RWPE1 (cell line): ENCODE measurements at regions of chr20 and their contacts with region 1.

Region 1: DNA sequence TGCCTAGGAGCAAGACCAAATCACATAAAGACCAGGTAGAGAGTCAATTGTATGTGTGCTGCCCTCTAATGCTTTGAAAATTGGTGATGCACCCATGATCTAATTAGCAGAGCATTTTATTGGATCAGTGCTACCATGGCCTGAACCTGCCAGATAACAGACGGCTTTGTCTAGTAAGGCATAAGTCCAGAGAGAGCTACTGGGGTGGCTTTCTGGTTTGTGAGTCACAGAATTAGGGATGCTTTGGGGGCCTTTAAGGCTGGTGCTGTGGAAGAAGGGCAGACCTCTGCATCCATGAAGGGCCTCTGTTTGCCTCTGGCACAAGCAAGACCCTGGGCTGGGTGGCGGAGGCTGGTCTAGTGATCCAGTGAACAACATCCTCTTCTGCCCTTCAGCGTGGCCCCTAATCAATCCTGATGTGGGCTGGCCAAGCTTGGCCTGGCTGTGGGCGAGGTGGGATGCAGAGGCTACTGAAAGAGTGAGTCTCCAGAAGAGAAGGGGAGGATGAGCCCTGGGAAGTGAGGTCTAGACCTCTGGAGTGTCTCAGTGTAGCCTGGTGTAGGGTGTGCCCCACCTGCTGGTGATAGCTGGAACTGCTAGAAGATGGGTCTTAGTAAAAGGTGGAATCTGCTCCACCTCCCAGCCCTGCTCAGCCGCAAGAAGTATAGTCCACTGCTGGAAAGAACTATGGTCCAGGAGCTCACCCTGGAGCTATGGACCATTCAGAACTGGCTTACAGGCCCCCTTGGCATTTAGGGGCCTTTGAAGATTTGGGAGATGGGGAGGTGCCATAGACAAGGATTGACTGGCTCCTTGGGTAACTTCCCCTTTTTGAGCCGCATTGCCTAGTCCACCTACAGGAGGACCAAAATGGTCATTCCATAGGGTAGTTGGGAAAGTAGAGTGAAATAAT is 36.7 kb upstream of the AAR2 start:
- DNase-seq: peak; percentile 92
- H3K27ac ChIP-seq: no peak overlapping the region
- CTCF ChIP-seq: peak; percentile 99

Region 2: DNA sequence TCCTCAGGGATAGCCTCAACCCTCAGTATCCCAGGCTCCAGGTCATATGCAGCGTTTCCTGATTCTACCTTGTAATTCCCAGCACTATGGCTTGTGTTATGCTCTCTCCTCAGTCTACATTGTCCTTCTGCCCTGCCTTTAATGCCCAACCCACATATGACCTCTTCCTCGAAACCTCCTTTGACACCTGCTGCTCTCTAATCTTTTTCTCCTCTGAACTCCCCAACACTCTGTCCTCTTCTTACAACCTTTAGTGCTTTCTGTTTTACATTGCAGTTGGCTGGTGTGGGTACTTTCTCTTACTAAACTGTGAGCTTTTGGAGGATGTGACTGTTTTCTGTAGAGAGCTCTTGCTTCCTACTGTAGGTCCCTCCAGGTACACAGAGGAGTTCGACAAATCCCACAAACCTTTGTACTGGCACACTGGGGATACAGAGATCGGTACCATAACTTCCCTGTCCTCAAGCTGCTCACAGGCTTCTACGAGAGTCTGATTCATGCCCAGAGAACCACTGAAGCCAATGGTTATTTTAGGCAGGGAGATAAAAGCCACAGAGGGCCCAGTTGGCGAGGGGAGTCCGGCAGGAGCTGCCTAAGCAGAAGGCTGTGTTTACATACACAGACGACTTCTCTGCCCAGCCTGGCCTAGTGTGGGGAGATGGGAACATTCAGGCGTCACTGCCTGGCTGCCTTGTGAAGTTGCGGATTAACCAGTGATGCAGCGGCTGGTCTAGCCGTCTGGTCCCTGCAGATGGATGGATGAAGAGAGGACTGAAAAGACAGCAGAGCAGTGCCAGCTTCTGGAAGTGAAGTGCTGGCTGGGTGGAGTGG is 53.5 kb before region 1 on chr20:
- CTCF ChIA-PET with region 1: interaction called, 19 read pairs
- POLR2A ChIA-PET with region 1: no interaction called
- DNase-seq: no peak
- H3K27ac ChIP-seq: no peak overlapping the region
- CTCF ChIP-seq: no peak

Region 3: DNA sequence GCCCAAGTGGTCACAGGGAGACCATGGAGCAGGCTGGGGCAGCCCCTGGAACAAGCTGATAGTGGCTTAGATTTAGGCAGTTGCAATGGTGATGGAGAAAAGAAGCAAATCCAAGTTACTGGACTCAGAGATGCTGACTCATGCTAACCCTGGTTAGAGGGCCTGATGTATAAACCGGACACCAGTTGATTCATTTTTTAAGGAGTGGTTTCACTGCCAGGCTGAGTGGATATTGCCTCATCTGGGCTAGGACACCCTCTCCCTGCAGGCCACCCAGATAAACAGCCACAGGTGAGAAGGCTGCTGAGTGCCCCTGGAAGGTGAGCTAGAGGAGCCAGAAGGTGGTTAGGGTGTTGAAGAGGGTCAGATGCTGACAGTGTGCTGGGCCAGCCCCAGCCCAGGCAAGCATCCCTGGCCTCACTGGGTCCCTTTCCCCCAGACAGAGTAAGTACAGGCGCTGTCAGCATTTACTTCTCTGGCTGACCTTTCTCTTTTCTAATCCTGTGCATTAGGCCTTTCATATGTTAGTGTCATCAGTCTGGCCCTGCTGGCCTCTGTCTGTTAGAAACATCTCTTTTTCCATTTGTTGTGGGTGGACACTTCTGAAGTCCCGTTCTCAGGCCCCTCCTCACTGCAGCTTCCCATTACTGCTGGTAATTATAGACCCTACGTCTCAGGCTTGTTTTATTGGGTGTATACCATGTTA is 31.6 kb before region 1 on chr20:
- CTCF ChIA-PET with region 1: interaction called, 10 read pairs
- POLR2A ChIA-PET with region 1: no interaction called
- DNase-seq: peak; percentile 80
- H3K27ac ChIP-seq: peak overlapping the region; percentile 65
- CTCF ChIP-seq: no peak

Region 4: DNA sequence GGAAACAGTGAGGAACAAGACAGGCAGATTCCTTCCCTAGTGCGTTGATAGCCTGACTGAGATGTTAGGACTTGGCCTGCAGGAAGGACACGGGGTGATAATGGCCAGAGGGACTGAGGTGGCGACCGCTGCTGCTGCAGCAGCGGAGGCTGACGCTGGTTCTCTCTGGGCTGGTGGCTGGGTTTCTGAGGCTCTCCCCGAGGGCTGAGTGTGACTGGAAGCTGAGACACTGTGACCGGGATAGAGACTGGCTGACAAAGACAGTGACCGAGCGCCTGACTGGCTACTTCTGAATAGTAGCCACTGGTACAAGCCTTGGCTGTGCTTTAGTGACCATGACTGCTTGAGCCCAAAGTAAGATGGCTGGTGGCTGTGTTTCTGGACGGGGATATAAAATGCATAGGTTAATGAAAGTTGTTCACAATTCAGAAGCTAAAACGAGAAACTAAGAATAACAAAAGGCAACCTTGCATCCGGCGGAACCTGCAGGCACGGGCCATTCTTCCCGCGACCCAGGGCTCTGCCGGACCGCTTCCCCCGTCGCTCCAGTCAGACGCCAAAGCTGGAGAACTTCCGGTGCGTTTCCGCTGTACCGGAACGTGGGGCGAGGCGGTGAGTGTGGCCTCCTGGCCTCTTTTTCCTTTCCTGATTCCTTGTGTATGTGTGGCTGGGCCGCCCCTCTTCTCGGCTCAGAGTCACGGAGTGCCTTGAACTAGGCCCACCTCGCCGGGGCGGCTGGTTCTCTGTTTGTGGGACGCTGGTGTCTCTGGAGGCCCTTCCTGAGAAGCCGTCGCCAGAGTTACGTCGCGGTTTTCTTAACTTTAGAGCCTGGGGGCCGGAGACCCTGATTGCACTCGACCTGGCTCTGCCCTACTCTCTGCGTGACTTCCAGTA is 36.5 kb after region 1 on chr20 and contains the start of gene AAR2:
- CTCF ChIA-PET with region 1: interaction called, 13 read pairs
- POLR2A ChIA-PET with region 1: no interaction called
- DNase-seq: peak; percentile 89
- H3K27ac ChIP-seq: peak within 1 kb of the TSS; percentile 75
- CTCF ChIP-seq: no peak

Region 5: DNA sequence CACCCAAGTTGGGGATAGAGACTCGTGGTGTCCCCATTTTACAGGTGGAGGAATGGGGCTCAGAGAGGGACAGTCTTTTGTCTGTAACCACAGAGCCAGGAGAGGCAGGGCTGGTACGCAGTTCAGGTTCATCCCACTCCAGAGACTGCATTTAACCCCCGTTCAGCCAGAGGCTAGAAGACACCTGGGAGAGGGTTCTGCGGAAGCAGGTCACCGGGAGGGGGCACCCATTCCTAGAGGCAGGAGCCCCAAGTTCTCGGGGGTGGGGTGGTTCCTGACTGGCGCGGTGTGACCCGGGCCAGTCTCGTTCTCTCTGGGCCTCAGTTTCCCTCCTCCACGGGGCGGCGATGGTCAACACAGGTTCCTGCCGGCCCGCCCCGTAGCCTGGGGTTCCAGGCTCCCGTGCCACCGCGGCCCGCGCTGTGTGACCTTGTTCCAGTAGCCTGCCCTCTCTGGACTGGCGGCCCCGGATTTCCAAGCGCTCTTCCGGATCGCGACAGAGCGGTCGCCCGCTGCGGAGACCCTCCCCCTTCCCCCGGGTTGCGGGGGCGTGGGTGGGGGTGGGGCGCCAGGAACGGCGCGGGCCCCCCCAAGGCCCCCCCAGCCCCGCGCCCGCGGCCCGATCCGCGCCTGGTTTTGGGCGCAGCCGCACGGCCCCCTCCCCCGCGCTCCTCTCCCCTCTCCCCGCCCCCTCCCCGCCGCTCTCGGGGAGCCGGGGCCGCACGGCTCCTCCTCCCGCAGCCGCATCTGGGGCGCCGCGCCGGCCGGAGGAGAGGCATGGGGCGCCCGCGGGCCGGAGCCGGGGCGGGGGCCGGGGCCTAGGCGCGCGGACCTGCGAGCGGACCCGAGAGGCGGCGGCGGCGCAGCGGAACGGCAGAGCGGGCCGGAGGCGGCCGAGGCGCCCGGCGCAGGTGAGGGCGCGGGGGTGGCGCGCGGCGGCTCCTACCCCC is 106.3 kb after region 1 on chr20 and contains the start of gene DLGAP4:
- CTCF ChIA-PET with region 1: no interaction called
- POLR2A ChIA-PET with region 1: no interaction called
- DNase-seq: no peak
- H3K27ac ChIP-seq: no peak within 1 kb of the TSS
- CTCF ChIP-seq: no peak

Region 6: DNA sequence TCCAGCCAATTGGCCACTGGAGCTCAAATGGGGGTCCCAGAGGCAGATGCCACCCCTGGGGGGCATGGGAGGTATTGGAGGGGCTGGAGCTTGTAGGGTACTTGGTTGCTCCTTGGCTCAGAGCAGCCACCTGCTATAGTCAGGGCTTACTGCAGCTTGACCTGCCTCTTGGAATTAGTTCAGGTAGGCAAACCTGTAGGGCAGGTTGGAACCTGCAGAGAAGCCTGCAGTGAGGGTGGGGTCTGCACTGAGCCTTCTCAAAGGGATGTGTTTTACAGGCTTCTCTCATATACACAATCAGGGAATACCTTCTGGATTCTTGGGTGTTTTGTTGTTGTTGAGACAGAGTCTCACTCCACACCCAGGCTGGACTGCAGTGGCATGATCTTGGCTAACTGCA is 247.5 kb after region 1 on chr20:
- CTCF ChIA-PET with region 1: interaction called, 11 read pairs
- POLR2A ChIA-PET with region 1: no interaction called
- DNase-seq: peak; percentile 74
- H3K27ac ChIP-seq: no peak overlapping the region
- CTCF ChIP-seq: no peak